ENCODE measurements at regions of chr5 and their contacts with region 1.

Region 1: DNA sequence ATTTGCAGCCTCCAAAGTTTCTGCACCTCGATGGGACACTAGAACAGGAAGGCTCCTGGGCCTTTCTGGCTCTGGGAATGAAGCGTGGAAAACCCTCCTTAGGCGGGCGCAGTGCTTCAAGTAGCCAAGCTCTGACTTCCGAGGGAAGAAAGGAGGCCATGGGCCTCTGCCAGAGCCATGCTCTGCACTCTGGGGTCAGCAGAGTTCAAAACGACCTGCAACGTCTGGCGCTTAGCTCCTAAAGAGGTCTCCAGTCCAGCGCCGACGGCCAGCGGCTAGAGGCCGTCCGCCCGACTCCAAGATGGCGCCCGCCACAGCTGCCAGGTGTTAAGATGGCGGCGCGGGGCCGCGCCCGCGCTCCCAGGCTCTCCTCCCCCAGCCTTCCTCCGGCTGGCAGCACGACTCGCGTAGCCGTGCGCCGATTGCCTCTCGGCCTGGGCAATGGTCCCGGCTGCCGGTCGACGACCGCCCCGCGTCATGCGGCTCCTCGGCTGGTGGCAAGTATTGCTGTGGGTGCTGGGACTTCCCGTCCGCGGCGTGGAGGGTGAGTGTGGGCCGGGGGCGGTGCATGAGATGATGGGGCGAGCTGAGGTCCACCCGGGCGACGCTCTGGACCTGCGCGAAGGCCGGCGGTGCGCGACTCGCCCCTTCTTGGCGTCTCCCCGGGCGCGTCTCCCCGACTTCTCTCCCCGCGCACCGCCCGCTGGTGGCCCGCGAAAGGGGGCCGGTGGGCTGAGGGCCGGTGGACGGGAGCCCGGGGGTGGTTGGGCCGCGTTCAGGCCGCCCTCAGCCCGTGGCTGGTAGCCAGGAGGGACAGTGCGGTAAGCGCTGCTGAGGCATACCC is at the start of gene TXNDC15:
- DNase-seq: peak; percentile 80
- H3K4me3 Mint-ChIP-seq: peak within 1 kb of the TSS; percentile 95
- H3K27ac Mint-ChIP-seq: peak within 1 kb of the TSS; percentile 96
- H3K4me1 Mint-ChIP-seq: peaks cover 28% of the 10 kb centered on the region
- H3K27me3 Mint-ChIP-seq: no peaks in the 10 kb centered on the region
- total RNA-seq, gene TXNDC15: 53.9 and 56.9 TPM in 2 replicates

Region 2: GRCh38 chr5:134758504-134759341 is 115.5 kb before region 1 on chr5 and contains the start of gene DDX46:
- intact Hi-C with region 1: loop called (anchors 2 kb)
- DNase-seq: peak; percentile 94
- H3K4me3 Mint-ChIP-seq: peak within 1 kb of the TSS; percentile 100
- H3K27ac Mint-ChIP-seq: peak within 1 kb of the TSS; percentile 97
- H3K4me1 Mint-ChIP-seq: peaks cover 24% of the 10 kb centered on the region
- H3K27me3 Mint-ChIP-seq: no peaks in the 10 kb centered on the region
- total RNA-seq, gene DDX46: 75.2 and 83.9 TPM in 2 replicates

Region 3: GRCh38 chr5:134845852-134846640 is 28.2 kb before region 1 on chr5 and contains the start of gene C5orf24:
- intact Hi-C with region 1: loop called (anchors 1 kb)
- DNase-seq: peak; percentile 91
- H3K4me3 Mint-ChIP-seq: peak within 1 kb of the TSS; percentile 94
- H3K27ac Mint-ChIP-seq: peak within 1 kb of the TSS; percentile 97
- H3K4me1 Mint-ChIP-seq: peaks cover 22% of the 10 kb centered on the region
- H3K27me3 Mint-ChIP-seq: no peaks in the 10 kb centered on the region
- total RNA-seq, gene C5orf24: 36.0 and 40.5 TPM in 2 replicates

Measured in activated T-helper 2 cell treated with anti-CD3 and anti-CD28 coated beads, Interferon-gamma antibody, Interleukin-2, Interleukin-4, amounts not matched to agents 10 μg/mL and 5 μg/mL and 100 μg/mL, durations not matched to agents 14 hours and 24 hours and 36 hours (primary cell).